SK-N-SH (cell line): ENCODE measurements at regions of chr22 and their contacts with region 1.

Region 1: GRCh38 chr22:23913661-23914353 is 19.6 kb downstream of the MIF start:
- DNase-seq: peak; percentile 98
- H3K4me3 ChIP-seq: peak overlapping the region; percentile 68
- H3K27ac ChIP-seq: peak overlapping the region; percentile 77 to 97
- H3K4me1 ChIP-seq: peaks cover 0 to 6% of the 10 kb centered on the region in 2 experiments; a peak in 2 of 4 replicates
- H3K27me3 ChIP-seq: no peaks in the 10 kb centered on the region
- CTCF ChIP-seq: no peak
- EP300 ChIP-seq: no peak
- RAD21 ChIP-seq: no peak

Region 2: GRCh38 chr22:23893943-23894709 is 19.7 kb before region 1 on chr22 and contains the start of gene MIF:
- CTCF ChIA-PET with region 1: interaction called, 21 read pairs
- POLR2A ChIA-PET with region 1: interaction called, 15 read pairs
- DNase-seq: peak; percentile 98
- H3K4me3 ChIP-seq: peak within 1 kb of the TSS; percentile 79 to 85
- H3K27ac ChIP-seq: peak within 1 kb of the TSS; percentile 84 to 96
- H3K4me1 ChIP-seq: peaks cover 10 to 33% of the 10 kb centered on the region in 2 experiments; a peak in 2 of 4 replicates
- H3K27me3 ChIP-seq: no peaks in the 10 kb centered on the region
- CTCF ChIP-seq: peak; percentile 89
- EP300 ChIP-seq: no peak
- RAD21 ChIP-seq: no peak
- polyA plus RNA-seq, gene MIF: 496 and 565 TPM in 2 replicates